ENCODE measurements at regions of chr19 and their contacts with region 1.

Region 1: GRCh38 chr19:13784731-13785452 is 10.4 kb upstream of the ZSWIM4 start:
- DNase-seq: peak; percentile 55 to 71
- H3K4me3 ChIP-seq: no peak overlapping the region
- H3K27ac ChIP-seq: peak overlapping the region; percentile 24; the same call in 1 of the 2 replicates
- H3K4me1 ChIP-seq: peaks cover 27% of the 10 kb centered on the region
- H3K27me3 ChIP-seq: no peaks in the 10 kb centered on the region
- CTCF ChIP-seq: peak; percentile 86

Region 2: GRCh38 chr19:13742756-13743155 is 42.1 kb before region 1 on chr19:
- CTCF ChIA-PET with region 1: no interaction called
- POLR2A ChIA-PET with region 1: interaction called, 18 read pairs
- intact Hi-C with region 1: no loop called
- DNase-seq: peak; percentile 24 to 80
- H3K4me3 ChIP-seq: peak overlapping the region; percentile 7; the same call in 1 of the 2 replicates
- H3K27ac ChIP-seq: peak overlapping the region; percentile 83
- H3K4me1 ChIP-seq: peaks cover 19% of the 10 kb centered on the region
- H3K27me3 ChIP-seq: no peaks in the 10 kb centered on the region
- CTCF ChIP-seq: no peak

Region 3: GRCh38 chr19:13846557-13847406 is 61.9 kb after region 1 on chr19:
- CTCF ChIA-PET with region 1: no interaction called
- POLR2A ChIA-PET with region 1: interaction called, 13 read pairs
- intact Hi-C with region 1: no loop called
- DNase-seq: peak; percentile 93 to 97
- H3K4me3 ChIP-seq: peak overlapping the region; percentile 77
- H3K27ac ChIP-seq: peak overlapping the region; percentile 97
- H3K4me1 ChIP-seq: peaks cover 70% of the 10 kb centered on the region
- H3K27me3 ChIP-seq: no peaks in the 10 kb centered on the region
- CTCF ChIP-seq: no peak

Region 4: DNA sequence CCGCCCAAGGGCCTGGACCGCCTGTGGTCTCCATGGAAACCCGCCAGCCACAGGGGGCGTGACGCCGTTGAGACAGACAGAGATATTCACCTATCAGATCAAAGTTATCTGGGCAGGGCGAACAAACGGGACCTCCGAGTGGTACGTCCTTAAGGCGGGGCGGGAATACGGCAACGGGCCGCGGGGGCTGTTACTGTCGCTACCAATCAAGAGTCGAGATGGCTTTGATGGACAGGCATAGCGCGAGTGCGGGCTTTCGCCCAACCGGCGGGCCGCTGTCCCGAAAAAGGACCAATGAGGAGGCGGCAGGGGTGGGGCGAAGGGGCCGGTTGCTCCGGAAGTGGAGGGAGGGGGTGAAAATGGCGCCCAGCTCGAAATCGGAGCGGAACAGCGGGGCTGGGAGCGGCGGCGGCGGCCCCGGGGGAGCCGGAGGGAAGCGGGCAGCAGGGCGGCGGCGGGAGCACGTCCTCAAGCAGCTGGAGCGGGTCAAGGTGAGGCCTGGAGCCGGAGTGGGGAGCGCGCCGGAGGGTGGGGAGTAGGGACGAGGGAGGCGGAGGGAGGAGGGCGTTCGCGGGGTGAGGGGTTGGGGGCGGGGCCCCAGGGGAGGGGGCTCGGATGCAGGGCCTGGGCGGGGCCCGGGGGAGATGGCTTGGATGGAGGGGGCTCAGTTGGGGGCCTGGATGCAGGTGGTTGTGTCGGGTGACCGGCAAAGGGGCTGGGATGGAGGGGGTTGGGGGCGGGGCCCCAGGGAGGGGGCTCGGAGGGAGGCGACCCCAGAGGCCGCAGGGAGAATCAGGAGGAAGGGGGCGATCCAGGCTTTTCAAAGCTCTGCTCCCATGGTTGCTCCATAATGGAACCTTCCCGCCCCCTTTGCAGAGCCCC is 167.5 kb after region 1 on chr19 and contains the start of gene DCAF15:
- CTCF ChIA-PET with region 1: no interaction called
- POLR2A ChIA-PET with region 1: interaction called, 27 read pairs
- intact Hi-C with region 1: no loop called
- DNase-seq: peak; percentile 99
- H3K4me3 ChIP-seq: peak within 1 kb of the TSS; percentile 82
- H3K27ac ChIP-seq: no peak within 1 kb of the TSS
- H3K4me1 ChIP-seq: peaks cover 6% of the 10 kb centered on the region
- H3K27me3 ChIP-seq: no peaks in the 10 kb centered on the region
- CTCF ChIP-seq: no peak
- total RNA-seq, gene DCAF15: 31.7 and 35.3 TPM in 2 replicates

Region 5: GRCh38 chr19:14061071-14061755 is 276.3 kb after region 1 on chr19:
- CTCF ChIA-PET with region 1: no interaction called
- POLR2A ChIA-PET with region 1: interaction called, 14 read pairs
- intact Hi-C with region 1: no loop called
- DNase-seq: peak; percentile 32 to 50
- H3K4me3 ChIP-seq: peak overlapping the region; percentile 44; the same call in 1 of the 2 replicates
- H3K27ac ChIP-seq: 0 out of 2 replicates have a peak overlapping the region, but pooled peaks have one; percentile 16
- H3K4me1 ChIP-seq: peaks cover 21% of the 10 kb centered on the region
- H3K27me3 ChIP-seq: no peaks in the 10 kb centered on the region
- CTCF ChIP-seq: no peak

Region 6: GRCh38 chr19:14505488-14506432 is 720.9 kb after region 1 on chr19:
- CTCF ChIA-PET with region 1: no interaction called
- POLR2A ChIA-PET with region 1: interaction called, 11 read pairs
- intact Hi-C with region 1: no loop called
- DNase-seq: peak; percentile 97 to 100
- H3K4me3 ChIP-seq: peak overlapping the region; percentile 45; the same call in 1 of the 2 replicates
- H3K27ac ChIP-seq: peak overlapping the region; percentile 99
- H3K4me1 ChIP-seq: peaks cover 84% of the 10 kb centered on the region
- H3K27me3 ChIP-seq: no peaks in the 10 kb centered on the region
- CTCF ChIP-seq: peak; percentile 99